Activated B cell treated with CpG ODN at 0.5 μM for 24 hours (primary cell): ENCODE measurements at regions of chr19 and their contacts with region 1.

Region 1: DNA sequence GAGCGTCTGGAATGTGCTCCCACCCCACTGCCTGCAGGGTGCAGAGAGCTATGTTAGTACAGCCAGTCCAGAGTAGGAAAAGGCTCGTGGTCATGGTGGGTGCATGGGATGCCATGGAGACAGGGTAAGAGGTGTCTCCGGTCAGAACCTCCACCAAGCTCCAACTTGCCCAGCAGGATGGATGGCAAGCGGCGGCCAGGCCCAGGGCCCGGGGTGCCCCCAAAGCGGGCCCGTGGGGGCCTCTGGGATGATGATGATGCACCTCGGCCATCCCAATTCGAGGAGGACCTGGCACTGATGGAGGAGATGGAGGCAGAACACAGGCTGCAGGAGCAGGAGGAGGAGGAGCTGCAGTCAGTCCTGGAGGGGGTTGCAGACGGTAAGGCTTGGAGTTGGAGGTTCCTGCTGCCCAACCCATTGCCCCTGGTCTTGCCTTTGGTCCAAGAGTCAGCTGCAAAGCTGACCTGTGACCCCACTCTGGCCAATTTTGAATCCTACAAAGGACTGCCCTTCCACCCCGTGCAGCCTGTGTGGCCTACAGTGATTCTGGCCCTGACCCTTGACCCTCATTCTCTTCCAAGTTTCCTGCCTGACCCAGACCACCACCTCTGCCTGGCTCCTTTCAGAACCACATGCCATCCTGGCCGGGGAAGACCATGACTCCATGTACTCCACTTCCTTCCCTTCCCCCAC is 14.7 kb downstream of the POLD1 start:
- DNase-seq: no peak
- ATAC-seq: no peak
- H3K4me3 Mint-ChIP-seq: no peak overlapping the region
- H3K27ac Mint-ChIP-seq: no peak overlapping the region
- H3K4me1 Mint-ChIP-seq: no peaks in the 10 kb centered on the region
- H3K27me3 Mint-ChIP-seq: no peaks in the 10 kb centered on the region
- CTCF ChIP-seq: no peak

Region 2: GRCh38 chr19:49699364-49699763 is 699.5 kb before region 1 on chr19:
- CTCF ChIA-PET with region 1: no interaction called
- POLR2A ChIA-PET with region 1: interaction called, 13 read pairs
- intact Hi-C with region 1: no loop called
- DNase-seq: no peak
- ATAC-seq: no peak
- H3K4me3 Mint-ChIP-seq: no peak overlapping the region
- H3K27ac Mint-ChIP-seq: no peak overlapping the region
- H3K4me1 Mint-ChIP-seq: no peaks in the 10 kb centered on the region
- H3K27me3 Mint-ChIP-seq: peaks cover 2% of the 10 kb centered on the region
- CTCF ChIP-seq: no peak

Region 3: DNA sequence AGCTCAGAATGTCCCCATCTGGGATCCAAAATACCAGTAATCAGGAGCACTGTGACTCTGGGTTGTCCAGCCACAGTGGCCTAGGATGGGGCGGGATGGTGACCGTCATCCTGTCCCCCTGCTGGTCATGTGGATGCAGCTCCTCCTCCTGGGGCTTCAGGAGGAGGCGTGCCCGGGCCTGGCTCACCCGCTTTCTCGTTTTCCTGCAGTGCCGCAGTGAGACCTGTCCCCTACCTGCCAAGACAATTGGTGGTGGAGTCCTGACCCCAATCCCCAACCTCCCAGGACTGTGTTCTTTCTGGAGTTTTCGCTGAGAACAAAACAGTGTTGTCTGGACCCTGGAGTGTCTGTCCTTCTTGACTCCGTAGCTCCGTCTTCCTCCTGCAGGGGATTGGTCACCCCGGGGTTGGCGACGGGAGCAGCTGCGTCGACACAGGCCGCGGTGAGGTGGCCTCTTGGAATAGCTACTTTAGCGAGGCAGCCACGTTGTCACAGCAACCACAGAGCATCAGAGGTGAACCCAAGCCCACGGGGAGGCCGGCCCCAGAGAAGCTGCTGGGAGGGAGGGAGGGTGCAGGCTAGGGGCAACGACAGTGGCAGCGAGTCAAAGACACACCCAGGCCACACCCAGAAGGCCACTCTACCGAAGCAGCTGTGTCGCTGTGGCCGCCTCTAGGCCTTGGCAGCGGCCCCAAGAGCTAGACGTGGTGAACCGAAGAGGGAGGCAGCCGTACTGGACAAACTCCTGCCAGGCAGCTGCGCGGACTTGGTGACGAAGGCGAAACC is 67.4 kb after region 1 on chr19:
- CTCF ChIA-PET with region 1: no interaction called
- POLR2A ChIA-PET with region 1: no interaction called
- intact Hi-C with region 1: no loop called
- DNase-seq: no peak
- ATAC-seq: no peak
- H3K4me3 Mint-ChIP-seq: no peak overlapping the region
- H3K27ac Mint-ChIP-seq: no peak overlapping the region
- H3K4me1 Mint-ChIP-seq: peaks cover 4% of the 10 kb centered on the region
- H3K27me3 Mint-ChIP-seq: peaks cover 5% of the 10 kb centered on the region
- CTCF ChIP-seq: no peak

Region 4: GRCh38 chr19:50511068-50511822 is 112.4 kb after region 1 on chr19 and contains the start of gene JOSD2:
- CTCF ChIA-PET with region 1: no interaction called
- POLR2A ChIA-PET with region 1: no interaction called
- intact Hi-C with region 1: no loop called
- DNase-seq: peak; percentile 96
- ATAC-seq: peak; percentile 94
- H3K4me3 Mint-ChIP-seq: peak within 1 kb of the TSS; percentile 89
- H3K27ac Mint-ChIP-seq: peak within 1 kb of the TSS; percentile 93
- H3K4me1 Mint-ChIP-seq: peaks cover 13% of the 10 kb centered on the region
- H3K27me3 Mint-ChIP-seq: peaks cover 5% of the 10 kb centered on the region
- CTCF ChIP-seq: no peak
- total RNA-seq, gene JOSD2: 21.0 and 23.7 TPM in 2 replicates